Activated T-helper 1 cell treated with anti-CD3 and anti-CD28 coated beads, Interleukin-12 subunit alpha, Interleukin-12 subunit beta, Interleukin-2, Interleukin-4 antibody, amounts not matched to agents 30 ng/mL and 10 ng/mL and 1 ng/mL, durations not matched to agents 14 hours and 24 hours and 36 hours (primary cell): ENCODE measurements at regions of chr3 and their contacts with region 1.

Region 1: GRCh38 chr3:13452490-13453335 is 27.4 kb upstream of the HDAC11 start:
- DNase-seq: peak; percentile 16
- H3K4me3 Mint-ChIP-seq: peak overlapping the region; percentile 91
- H3K27ac Mint-ChIP-seq: peak overlapping the region; percentile 3
- H3K4me1 Mint-ChIP-seq: peaks cover 17% of the 10 kb centered on the region
- H3K27me3 Mint-ChIP-seq: no peaks in the 10 kb centered on the region

Region 2: GRCh38 chr3:12810013-12810780 is 642.5 kb before region 1 on chr3:
- intact Hi-C with region 1: loop called (anchors 2 kb)
- DNase-seq: peak; percentile 86
- H3K4me3 Mint-ChIP-seq: peak overlapping the region; percentile 26
- H3K27ac Mint-ChIP-seq: no peak overlapping the region
- H3K4me1 Mint-ChIP-seq: peaks cover 5% of the 10 kb centered on the region
- H3K27me3 Mint-ChIP-seq: peaks cover 6% of the 10 kb centered on the region

Region 3: DNA sequence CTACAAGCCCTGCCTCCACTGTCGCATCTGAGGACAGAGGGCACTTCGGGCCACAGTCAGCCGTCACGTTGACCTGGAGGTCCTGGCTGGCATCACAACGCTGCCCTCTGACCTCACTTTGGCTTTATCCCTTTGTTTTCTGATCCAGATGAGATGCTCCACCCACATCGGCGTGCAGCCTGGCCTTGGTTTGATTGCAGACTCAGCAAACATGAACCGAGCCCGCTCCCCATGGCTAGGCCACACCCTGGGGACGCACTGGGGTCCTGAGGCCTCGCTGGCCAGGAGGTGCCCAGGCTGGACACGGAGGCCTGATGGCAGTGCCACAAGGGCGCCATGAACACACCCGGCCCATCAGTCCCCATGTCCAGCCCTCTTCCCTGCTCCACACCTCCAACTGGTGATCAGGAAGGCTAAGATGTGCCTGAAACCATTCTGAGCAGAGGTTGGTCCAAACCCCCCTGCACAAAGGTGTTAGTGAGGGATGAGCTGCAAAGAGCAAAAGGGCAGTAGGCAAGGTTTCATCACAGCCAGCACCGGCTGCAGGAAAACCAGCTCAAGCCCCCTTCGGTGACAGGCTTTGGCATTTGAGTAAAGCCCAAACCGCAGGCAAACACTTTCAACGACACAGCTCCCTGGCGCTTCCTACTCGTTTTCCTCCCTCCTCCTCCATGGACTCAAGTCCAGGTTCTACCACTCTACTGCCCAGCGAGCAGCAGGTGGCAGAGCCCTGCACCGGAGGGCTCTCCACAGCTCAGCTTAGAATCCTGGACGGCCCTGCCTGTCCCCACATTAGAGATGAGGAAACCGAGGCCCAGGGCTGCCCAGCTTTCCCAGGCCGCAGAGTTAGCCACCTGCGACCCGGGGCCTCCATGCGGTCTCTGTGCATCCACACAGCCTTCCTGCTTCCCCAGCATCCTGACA is 198.4 kb before region 1 on chr3:
- intact Hi-C with region 1: no loop called
- DNase-seq: no peak
- H3K4me3 Mint-ChIP-seq: no peak overlapping the region
- H3K27ac Mint-ChIP-seq: no peak overlapping the region
- H3K4me1 Mint-ChIP-seq: no peaks in the 10 kb centered on the region
- H3K27me3 Mint-ChIP-seq: no peaks in the 10 kb centered on the region

Region 4: DNA sequence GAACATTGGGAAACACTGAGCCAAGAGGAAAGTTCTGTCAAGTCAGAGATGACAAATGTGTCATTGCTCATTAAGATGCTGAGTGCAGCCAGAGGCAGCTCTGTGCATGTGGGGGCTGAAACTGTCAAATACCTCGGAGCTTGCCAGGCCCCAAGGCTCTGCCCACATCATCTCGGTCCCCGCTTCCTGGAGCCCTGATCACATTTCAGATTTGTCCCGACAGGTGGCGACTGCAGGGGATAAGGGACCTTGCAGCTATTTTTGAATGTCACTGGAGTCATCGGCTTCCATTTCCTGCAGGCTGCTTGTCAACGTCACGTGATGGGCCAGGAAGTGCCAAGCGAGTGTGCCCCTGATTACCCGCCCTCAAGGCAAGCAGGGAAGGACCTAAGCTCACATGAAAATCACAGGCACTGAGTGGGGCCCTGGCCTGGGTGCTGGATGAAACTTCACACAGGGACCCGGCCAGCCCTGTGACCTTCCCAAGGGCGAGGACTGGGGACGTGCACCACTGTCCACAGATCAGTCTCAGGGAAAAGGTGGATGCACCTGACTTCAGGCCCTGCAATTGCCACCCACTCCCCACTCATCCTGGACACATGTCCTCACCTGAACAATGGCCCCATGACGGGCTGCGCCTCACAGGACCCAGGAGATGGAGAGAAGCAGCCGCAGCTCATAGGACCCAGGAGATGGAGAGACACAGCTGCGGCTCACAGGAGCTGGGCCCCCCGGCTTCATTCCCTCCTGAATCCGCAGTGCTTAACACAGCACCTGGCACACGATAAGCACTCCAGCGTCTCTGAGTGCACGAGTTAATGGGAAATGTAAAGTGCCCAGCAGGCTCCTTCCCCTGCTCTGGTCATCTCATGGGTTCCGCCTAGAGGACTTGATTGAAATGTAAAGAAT is 106.0 kb before region 1 on chr3:
- intact Hi-C with region 1: loop called (anchors 1 kb)
- DNase-seq: peak; percentile 59
- H3K4me3 Mint-ChIP-seq: no peak overlapping the region
- H3K27ac Mint-ChIP-seq: peak overlapping the region; percentile 74
- H3K4me1 Mint-ChIP-seq: peaks cover 52% of the 10 kb centered on the region
- H3K27me3 Mint-ChIP-seq: no peaks in the 10 kb centered on the region

Region 5: DNA sequence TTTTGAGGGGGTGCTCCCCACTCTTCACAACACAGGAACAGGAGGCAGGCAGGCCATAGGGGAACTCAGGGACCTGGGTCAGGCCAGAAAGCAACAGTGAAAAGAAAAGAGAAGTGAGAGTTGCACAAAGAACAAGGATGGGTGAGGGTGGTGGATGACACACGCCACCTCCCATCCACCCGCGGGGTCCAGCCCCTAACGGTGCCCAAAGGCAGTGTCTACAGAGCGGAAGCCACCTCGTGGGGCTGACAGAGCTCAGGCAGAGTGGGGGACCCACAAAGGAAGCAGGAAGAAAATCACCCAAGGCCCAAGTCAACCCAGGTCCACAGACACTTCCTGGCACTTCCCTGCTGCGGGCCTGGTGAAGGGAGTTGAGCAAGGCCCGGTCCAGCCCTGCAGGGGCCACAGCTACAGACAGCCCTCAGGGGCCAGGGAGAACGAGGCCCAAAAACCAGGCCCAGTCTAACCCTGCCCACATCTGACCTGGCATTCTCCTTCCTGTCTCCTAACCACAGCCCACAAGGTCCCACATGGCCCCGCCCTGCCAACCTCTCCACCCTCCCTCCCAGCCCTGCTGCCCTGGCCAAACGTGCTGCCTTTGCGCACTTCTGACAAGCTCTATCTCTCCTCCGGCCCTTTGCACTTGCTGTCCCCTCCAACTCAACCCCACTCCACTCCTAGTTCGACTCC is 38.5 kb before region 1 on chr3:
- intact Hi-C with region 1: loop called (anchors 1 kb)
- DNase-seq: peak; percentile 57
- H3K4me3 Mint-ChIP-seq: peak overlapping the region; percentile 71
- H3K27ac Mint-ChIP-seq: peak overlapping the region; percentile 93
- H3K4me1 Mint-ChIP-seq: peaks cover 59% of the 10 kb centered on the region
- H3K27me3 Mint-ChIP-seq: no peaks in the 10 kb centered on the region

Region 6: GRCh38 chr3:13479581-13480339 is 27.0 kb after region 1 on chr3 and contains the start of gene HDAC11:
- intact Hi-C with region 1: loop called (anchors 1 kb)
- DNase-seq: peak; percentile 98
- H3K4me3 Mint-ChIP-seq: peak within 1 kb of the TSS; percentile 88
- H3K27ac Mint-ChIP-seq: peak within 1 kb of the TSS; percentile 84
- H3K4me1 Mint-ChIP-seq: peaks cover under 1% of the 10 kb centered on the region
- H3K27me3 Mint-ChIP-seq: peaks cover 7% of the 10 kb centered on the region
- total RNA-seq, gene HDAC11: 1.4 and 2.0 TPM in 2 replicates